Activated naive CD4-positive, alpha-beta T cell treated with anti-CD3 and anti-CD28 coated beads for 36 hours (primary cell): ENCODE measurements at regions of chr19 and their contacts with region 1.

Region 1: DNA sequence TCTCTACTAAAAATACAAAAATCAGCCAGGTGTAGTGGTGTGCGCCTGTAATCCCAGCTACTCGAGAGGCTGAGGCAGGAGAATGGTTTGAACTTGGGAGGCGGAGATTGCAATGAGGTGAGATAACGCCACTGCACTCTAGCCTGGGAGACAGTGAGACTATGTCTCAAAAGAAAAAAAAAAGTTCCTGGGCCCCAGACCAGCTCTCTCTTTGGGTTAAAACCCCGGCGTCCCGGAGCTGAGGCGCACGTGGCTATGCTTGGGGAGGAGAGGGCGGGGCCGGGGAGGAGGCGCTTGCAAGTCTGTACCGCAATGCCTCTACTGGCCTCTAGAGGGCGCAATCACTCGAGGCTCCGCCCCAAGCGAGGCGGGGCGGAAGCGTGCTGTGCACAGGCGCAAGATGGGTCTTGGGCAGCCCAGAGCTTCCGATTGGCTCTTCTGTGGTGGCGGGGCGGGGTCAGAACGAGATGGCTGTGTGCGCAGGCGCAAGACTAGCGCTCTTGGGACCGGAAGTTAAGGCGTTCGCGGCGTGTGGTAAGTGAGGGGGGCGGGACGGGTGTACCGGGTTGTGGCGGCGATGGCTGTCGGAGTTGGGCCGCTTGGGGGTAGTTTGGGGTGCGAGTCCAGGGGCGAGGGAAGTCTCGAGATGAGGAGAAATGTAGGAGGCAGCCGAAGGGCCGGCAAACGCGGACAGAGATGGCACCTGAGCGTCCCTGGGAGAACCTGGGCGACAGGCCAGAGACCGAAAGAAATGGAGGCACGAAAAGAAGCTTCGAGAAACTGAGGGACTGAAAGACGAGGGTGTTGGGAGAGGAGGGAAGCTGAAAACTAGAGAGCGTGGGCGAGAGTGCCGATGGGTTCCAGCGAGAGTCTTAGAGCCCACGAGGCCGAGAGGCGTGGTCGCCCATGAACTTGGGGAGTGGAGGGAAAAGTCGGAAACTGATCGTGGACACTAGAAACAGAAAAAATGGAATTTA is at the start of gene DHX34:
- DNase-seq: peak; percentile 99
- H3K4me3 Mint-ChIP-seq: peak within 1 kb of the TSS; percentile 100
- H3K27ac Mint-ChIP-seq: peak within 1 kb of the TSS; percentile 88
- H3K4me1 Mint-ChIP-seq: peaks cover 43% of the 10 kb centered on the region
- H3K27me3 Mint-ChIP-seq: no peaks in the 10 kb centered on the region
- total RNA-seq, gene DHX34: 11.2 to 11.6 TPM

Region 2: DNA sequence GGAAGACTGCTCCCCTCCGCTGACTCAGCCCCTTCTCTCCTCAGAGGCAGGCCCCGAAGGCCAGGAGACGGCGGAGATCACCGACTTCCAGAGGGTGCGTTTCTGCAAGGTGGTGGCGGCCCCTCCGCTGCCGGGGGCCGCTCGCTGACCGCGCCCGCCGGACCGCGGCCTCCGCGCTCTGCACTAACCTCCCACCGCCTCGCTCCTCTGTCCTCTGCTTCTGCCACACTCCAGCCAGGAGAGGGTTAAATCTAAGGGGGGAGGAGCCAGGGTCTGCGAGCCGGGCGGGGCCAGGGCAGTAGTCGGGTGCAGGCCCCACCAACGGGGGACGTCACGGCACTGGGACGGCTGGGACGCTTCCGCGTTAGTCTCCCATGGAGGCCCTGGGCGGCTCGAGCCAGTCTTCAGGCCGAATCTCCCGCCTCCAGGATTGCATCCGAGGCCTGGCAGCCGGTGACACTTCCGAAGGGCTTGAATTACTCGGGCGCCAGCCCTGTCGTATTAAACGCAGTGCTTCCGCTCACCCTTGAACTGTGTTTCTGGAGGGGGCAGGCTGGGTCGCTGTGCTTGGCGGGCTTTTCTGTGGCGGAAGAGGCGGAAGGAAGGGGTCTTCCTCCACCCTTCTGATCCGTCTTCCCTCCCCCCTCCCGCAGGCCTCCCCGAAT is 75.7 kb before region 1 on chr19:
- CTCF ChIA-PET with region 1: interaction called, 9 read pairs
- intact Hi-C with region 1: loop called (anchors 1 kb)
- DNase-seq: peak; percentile 90
- H3K4me3 Mint-ChIP-seq: peak overlapping the region; percentile 96
- H3K27ac Mint-ChIP-seq: peak overlapping the region; percentile 97
- H3K4me1 Mint-ChIP-seq: peaks cover 22% of the 10 kb centered on the region
- H3K27me3 Mint-ChIP-seq: no peaks in the 10 kb centered on the region

Region 3: GRCh38 chr19:47315125-47315821 is 33.8 kb before region 1 on chr19:
- CTCF ChIA-PET with region 1: interaction called, 6 read pairs
- intact Hi-C with region 1: loop called (anchors 2 kb)
- DNase-seq: peak; percentile 63
- H3K4me3 Mint-ChIP-seq: no peak overlapping the region
- H3K27ac Mint-ChIP-seq: no peak overlapping the region
- H3K4me1 Mint-ChIP-seq: peaks cover 3% of the 10 kb centered on the region
- H3K27me3 Mint-ChIP-seq: peaks cover 15% of the 10 kb centered on the region

Region 4: GRCh38 chr19:47391510-47392223 is 42.6 kb after region 1 on chr19:
- CTCF ChIA-PET with region 1: interaction called, 10 read pairs
- intact Hi-C with region 1: no loop called
- DNase-seq: peak; percentile 91
- H3K4me3 Mint-ChIP-seq: no peak overlapping the region
- H3K27ac Mint-ChIP-seq: no peak overlapping the region
- H3K4me1 Mint-ChIP-seq: peaks cover 2% of the 10 kb centered on the region
- H3K27me3 Mint-ChIP-seq: peaks cover 2% of the 10 kb centered on the region

Region 5: GRCh38 chr19:47745010-47745901 is 396.1 kb after region 1 on chr19 and contains the start of gene NOP53:
- CTCF ChIA-PET with region 1: no interaction called
- intact Hi-C with region 1: loop called (anchors 1 kb)
- DNase-seq: peak; percentile 98
- H3K4me3 Mint-ChIP-seq: peak within 1 kb of the TSS; percentile 99
- H3K27ac Mint-ChIP-seq: peak within 1 kb of the TSS; percentile 100
- H3K4me1 Mint-ChIP-seq: peaks cover 56% of the 10 kb centered on the region
- H3K27me3 Mint-ChIP-seq: no peaks in the 10 kb centered on the region
- total RNA-seq, gene NOP53: 274 to 300 TPM